GM23248 (cell line): ENCODE measurements at regions of chr9 and their contacts with region 1.

Region 1: GRCh38 chr9:34591248-34591916 is 1.9 kb upstream of the CNTFR start:
- DNase-seq: peak; percentile 87
- H3K4me3 ChIP-seq: no peak overlapping the region
- H3K27ac ChIP-seq: no peak overlapping the region
- H3K4me1 ChIP-seq: no peaks in the 10 kb centered on the region
- H3K27me3 ChIP-seq: peaks cover 76% of the 10 kb centered on the region

Region 2: GRCh38 chr9:34403554-34404380 is 187.6 kb before region 1 on chr9:
- in situ Hi-C with region 1: loop called (anchors 10 kb)
- DNase-seq: peak; percentile 69
- H3K4me3 ChIP-seq: no peak overlapping the region
- H3K27ac ChIP-seq: no peak overlapping the region
- H3K4me1 ChIP-seq: peaks cover 10% of the 10 kb centered on the region; the same call in 1 of the 2 replicates
- H3K27me3 ChIP-seq: no peaks in the 10 kb centered on the region

Region 3: DNA sequence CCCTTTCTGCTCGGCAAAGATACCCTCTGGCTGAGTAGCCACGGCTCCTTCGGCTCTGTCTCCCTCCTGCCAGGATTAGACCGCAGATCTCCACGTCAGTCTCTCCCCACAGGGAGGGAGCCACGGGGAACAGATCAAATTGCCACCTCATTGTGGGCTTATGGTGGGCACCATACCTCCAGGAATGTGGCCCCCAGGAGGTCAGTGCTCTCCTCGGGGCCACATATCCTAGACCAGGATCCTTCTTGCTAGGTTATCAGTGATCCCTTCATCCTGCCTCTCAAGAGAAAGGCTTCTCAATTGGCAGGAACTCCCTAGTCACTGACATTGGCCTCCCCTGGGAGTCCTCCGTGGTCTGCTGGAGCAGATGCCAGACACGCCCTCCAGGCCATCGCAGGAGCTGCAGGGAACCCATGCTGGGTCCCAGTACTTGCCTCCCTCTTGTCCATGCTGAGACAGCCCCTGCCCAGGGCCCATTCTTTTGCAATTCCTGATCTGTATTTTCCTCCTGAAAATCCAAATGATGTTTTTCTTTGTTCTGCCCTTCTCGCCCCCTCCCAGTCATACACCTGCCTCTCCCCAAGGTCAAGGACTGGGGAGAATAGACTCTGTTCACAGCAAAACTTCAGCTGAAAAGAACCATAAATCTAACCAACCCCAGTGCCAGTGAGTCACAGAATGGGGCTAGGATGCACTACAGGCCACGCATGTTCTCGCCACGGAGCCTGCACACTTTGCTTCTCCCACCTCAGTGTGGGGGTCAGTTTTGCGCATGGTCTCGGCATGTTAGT is 37.0 kb before region 1 on chr9:
- in situ Hi-C with region 1: loop called (anchors 5 kb)
- DNase-seq: peak; percentile 14
- H3K4me3 ChIP-seq: no peak overlapping the region
- H3K27ac ChIP-seq: no peak overlapping the region
- H3K4me1 ChIP-seq: no peaks in the 10 kb centered on the region
- H3K27me3 ChIP-seq: no peaks in the 10 kb centered on the region

Region 4: GRCh38 chr9:34862043-34862442 is 270.7 kb after region 1 on chr9:
- in situ Hi-C with region 1: no loop called
- DNase-seq: no peak
- H3K4me3 ChIP-seq: no peak overlapping the region
- H3K27ac ChIP-seq: no peak overlapping the region
- H3K4me1 ChIP-seq: no peaks in the 10 kb centered on the region
- H3K27me3 ChIP-seq: no peaks in the 10 kb centered on the region; the same call in 1 of the 2 replicates